CD8-positive, alpha-beta T cell (primary cell): ENCODE measurements at regions of chr20 and their contacts with region 1.

Region 1: GRCh38 chr20:48828022-48828743 is 384 bp upstream of the PREX1 start:
- DNase-seq: peak; percentile 72 to 94 (median 83)
- ATAC-seq: peak; percentile 69
- H3K4me3 ChIP-seq: peak overlapping the region in 1 of 2 experiments; percentile 49
- H3K4me3 Mint-ChIP-seq: peak overlapping the region; percentile 86
- H3K27ac ChIP-seq: peak overlapping the region; percentile 39 to 47
- H3K27ac Mint-ChIP-seq: peak overlapping the region; percentile 90
- H3K4me1 ChIP-seq: peaks cover 33% of the 10 kb centered on the region
- H3K4me1 Mint-ChIP-seq: peaks cover 35% of the 10 kb centered on the region
- H3K27me3 ChIP-seq: no peaks in the 10 kb centered on the region
- H3K27me3 Mint-ChIP-seq: no peaks in the 10 kb centered on the region
- CTCF ChIP-seq: no peak

Region 2: DNA sequence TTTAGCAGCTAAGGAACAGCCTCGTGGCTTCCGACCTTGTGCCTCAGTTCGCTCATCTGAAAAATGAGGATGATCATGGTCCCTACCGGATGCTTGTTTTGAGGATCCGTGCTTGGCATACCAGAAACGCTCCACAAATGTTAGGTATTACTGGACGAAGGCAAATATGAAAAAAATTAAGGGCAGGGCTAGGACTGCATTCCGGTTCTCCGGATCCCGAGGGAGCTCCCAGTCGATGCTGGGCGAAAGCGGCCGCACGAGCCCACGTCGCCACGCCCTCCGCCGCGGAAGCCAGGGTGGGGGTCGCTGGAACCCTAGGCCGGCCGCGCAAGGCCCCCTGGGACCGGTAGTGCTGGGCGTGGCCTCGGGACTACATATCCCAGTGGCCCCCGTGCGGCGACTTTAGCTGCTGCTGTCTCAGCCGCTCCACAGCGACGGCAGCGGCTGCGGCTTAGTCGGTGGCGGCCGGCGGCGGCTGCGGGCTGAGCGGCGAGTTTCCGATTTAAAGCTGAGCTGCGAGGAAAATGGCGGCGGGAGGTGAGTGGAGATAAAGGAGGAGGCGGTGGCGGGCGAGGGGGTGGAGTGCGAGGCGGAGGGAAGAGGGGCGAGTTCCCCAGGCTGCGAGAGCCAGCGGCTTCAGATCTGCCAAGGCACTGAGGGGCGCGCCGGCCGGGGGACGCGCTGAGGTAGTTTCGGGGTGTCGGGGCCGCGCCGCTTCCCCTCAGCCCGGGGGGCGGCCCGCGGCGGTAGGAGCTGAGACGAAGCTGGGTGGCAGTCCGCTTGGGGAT is 1326.5 kb before region 1 on chr20 and contains the start of gene NCOA3:
- CTCF ChIA-PET with region 1: no interaction called
- POLR2A ChIA-PET with region 1: no interaction called
- intact Hi-C with region 1: loop called in 1 of 2 experiments (anchors 10 kb)
- DNase-seq: peak; percentile 73 to 92 (median 90)
- ATAC-seq: peak; percentile 80
- H3K4me3 ChIP-seq: peak within 1 kb of the TSS; percentile 60 to 91
- H3K4me3 Mint-ChIP-seq: peak within 1 kb of the TSS; percentile 97
- H3K27ac ChIP-seq: peak within 1 kb of the TSS; percentile 49 to 71
- H3K27ac Mint-ChIP-seq: peak within 1 kb of the TSS; percentile 98
- H3K4me1 ChIP-seq: peaks cover 24% of the 10 kb centered on the region
- H3K4me1 Mint-ChIP-seq: peaks cover 37% of the 10 kb centered on the region
- H3K27me3 ChIP-seq: no peaks in the 10 kb centered on the region
- H3K27me3 Mint-ChIP-seq: no peaks in the 10 kb centered on the region
- CTCF ChIP-seq: peak; percentile 34
- total RNA-seq, gene NCOA3: 45.1 to 47.1 TPM

Region 3: DNA sequence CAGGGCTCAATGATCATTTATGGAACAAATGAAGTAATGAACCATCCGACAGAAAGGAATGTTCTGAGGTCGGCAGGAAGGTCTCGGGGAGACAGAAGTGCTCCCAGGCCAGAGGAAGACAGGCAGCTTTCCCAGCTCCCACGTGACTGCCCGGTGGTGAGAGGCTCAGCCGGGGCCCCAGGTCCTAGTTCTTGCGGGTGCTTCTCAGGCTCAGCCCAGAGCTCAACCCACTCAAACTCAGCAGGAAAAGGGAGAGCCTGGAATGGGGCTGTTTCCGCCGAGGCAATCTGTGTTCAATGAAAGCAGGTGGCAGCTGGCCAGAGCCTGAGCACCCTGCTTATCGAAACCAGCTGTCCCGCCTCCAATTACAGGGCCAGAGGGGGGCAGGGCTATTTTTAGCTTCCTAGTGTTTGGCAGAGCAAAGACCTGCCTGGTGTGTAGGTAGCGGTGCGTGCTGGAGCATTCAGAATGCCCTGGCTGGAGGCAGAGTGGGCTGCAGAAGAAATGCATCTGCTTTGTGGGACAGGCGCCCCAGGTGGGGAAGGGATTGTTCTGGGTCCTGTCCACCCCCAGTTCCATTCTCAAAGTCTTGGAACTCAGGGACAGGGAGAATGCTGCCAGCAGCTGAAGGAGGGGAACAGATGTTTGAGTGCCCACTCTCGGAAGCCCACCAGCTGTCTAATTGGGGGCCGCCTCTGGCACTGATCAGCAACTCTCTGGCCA is 145.5 kb before region 1 on chr20:
- CTCF ChIA-PET with region 1: no interaction called
- POLR2A ChIA-PET with region 1: no interaction called
- intact Hi-C with region 1: no loop called
- DNase-seq: no peak
- ATAC-seq: no peak
- H3K4me3 ChIP-seq: no peak overlapping the region
- H3K4me3 Mint-ChIP-seq: no peak overlapping the region
- H3K27ac ChIP-seq: no peak overlapping the region
- H3K27ac Mint-ChIP-seq: peak overlapping the region; percentile 13
- H3K4me1 ChIP-seq: no peaks in the 10 kb centered on the region
- H3K4me1 Mint-ChIP-seq: peaks cover 1% of the 10 kb centered on the region
- H3K27me3 ChIP-seq: no peaks in the 10 kb centered on the region
- H3K27me3 Mint-ChIP-seq: no peaks in the 10 kb centered on the region
- CTCF ChIP-seq: no peak

Region 4: GRCh38 chr20:48718857-48719578 is 109.2 kb before region 1 on chr20:
- CTCF ChIA-PET with region 1: interaction called, 4 read pairs
- POLR2A ChIA-PET with region 1: interaction called, 8 read pairs
- intact Hi-C with region 1: loop called (anchors 5 kb)
- DNase-seq: peak in 8 of 9 experiments; percentile 31 to 77 (median 60)
- ATAC-seq: peak; percentile 46
- H3K4me3 ChIP-seq: no peak overlapping the region
- H3K4me3 Mint-ChIP-seq: peak overlapping the region; percentile 66
- H3K27ac ChIP-seq: peak overlapping the region in 1 of 2 experiments; percentile 60
- H3K27ac Mint-ChIP-seq: peak overlapping the region; percentile 92
- H3K4me1 ChIP-seq: peaks cover 98% of the 10 kb centered on the region
- H3K4me1 Mint-ChIP-seq: peaks cover 95% of the 10 kb centered on the region
- H3K27me3 ChIP-seq: no peaks in the 10 kb centered on the region
- H3K27me3 Mint-ChIP-seq: no peaks in the 10 kb centered on the region
- CTCF ChIP-seq: no peak

Region 5: GRCh38 chr20:48750947-48751635 is 77.1 kb before region 1 on chr20:
- CTCF ChIA-PET with region 1: interaction called, 3 read pairs
- POLR2A ChIA-PET with region 1: interaction called, 15 read pairs
- intact Hi-C with region 1: no loop called
- DNase-seq: peak; percentile 16 to 81 (median 58)
- ATAC-seq: peak; percentile 78
- H3K4me3 ChIP-seq: peak overlapping the region; percentile 27 to 32
- H3K4me3 Mint-ChIP-seq: peak overlapping the region; percentile 56
- H3K27ac ChIP-seq: peak overlapping the region; percentile 12 to 68
- H3K27ac Mint-ChIP-seq: peak overlapping the region; percentile 88
- H3K4me1 ChIP-seq: peaks cover 67% of the 10 kb centered on the region
- H3K4me1 Mint-ChIP-seq: peaks cover 77% of the 10 kb centered on the region
- H3K27me3 ChIP-seq: no peaks in the 10 kb centered on the region
- H3K27me3 Mint-ChIP-seq: no peaks in the 10 kb centered on the region
- CTCF ChIP-seq: no peak

Region 6: DNA sequence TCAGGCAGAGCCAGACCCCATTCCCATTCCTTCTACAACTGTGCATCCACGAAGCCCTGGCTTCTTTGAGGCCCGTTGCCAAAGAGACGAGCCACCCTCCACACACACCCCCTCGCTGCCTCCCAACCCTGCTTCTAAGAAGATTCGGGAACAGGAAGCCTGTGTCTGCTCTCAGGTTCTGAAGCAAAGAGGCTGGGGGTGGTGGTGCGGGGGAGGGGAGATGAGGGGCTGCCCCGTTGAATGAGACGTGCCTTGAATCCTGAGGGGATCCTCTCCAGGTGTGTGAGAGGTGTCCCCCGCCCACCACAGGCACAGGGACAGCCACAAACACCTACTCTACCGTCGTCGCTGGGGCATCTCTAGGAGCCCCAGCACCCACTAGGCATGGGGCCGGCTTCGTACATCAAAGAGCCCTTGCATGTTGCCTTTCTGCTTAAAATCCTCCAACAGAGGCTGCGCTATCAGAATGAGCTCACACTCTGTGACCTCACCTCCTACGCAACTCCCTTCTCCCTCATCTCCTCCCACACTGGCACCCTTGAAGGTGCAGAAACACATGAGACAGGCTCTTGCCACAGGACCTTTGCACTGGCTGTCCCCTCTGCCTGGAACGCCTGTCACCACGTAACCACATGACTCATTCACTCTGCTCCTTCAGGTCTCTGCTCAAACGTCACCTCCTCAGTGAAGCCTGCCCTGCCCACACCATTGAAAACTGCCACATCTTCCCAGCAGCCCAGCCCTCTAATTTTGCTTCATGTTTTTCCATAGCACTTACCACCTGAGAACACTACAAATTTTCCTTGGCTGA is 58.9 kb before region 1 on chr20:
- CTCF ChIA-PET with region 1: interaction called, 4 read pairs
- POLR2A ChIA-PET with region 1: interaction called, 3 read pairs
- intact Hi-C with region 1: loop called in 1 of 2 experiments (anchors 1 kb)
- DNase-seq: peak; percentile 55 to 98 (median 85)
- ATAC-seq: peak; percentile 85
- H3K4me3 ChIP-seq: no peak overlapping the region
- H3K4me3 Mint-ChIP-seq: peak overlapping the region; percentile 71
- H3K27ac ChIP-seq: peak overlapping the region; percentile 62 to 89
- H3K27ac Mint-ChIP-seq: peak overlapping the region; percentile 92
- H3K4me1 ChIP-seq: peaks cover 80% of the 10 kb centered on the region
- H3K4me1 Mint-ChIP-seq: peaks cover 91% of the 10 kb centered on the region
- H3K27me3 ChIP-seq: no peaks in the 10 kb centered on the region
- H3K27me3 Mint-ChIP-seq: no peaks in the 10 kb centered on the region
- CTCF ChIP-seq: no peak

Region 7: GRCh38 chr20:48850257-48850975 is 22.2 kb after region 1 on chr20:
- CTCF ChIA-PET with region 1: interaction called, 3 read pairs
- POLR2A ChIA-PET with region 1: no interaction called
- intact Hi-C with region 1: loop called in 1 of 2 experiments (anchors 2 kb)
- DNase-seq: no peak
- ATAC-seq: no peak
- H3K4me3 ChIP-seq: no peak overlapping the region
- H3K4me3 Mint-ChIP-seq: no peak overlapping the region
- H3K27ac ChIP-seq: no peak overlapping the region
- H3K27ac Mint-ChIP-seq: no peak overlapping the region
- H3K4me1 ChIP-seq: no peaks in the 10 kb centered on the region
- H3K4me1 Mint-ChIP-seq: peaks cover 4% of the 10 kb centered on the region
- H3K27me3 ChIP-seq: peaks cover 0 to 3% of the 10 kb centered on the region in 2 experiments
- H3K27me3 Mint-ChIP-seq: no peaks in the 10 kb centered on the region
- CTCF ChIP-seq: no peak

Region 8: GRCh38 chr20:49278036-49278817 is 450.0 kb after region 1 on chr20 and contains the start of gene ZNFX1:
- CTCF ChIA-PET with region 1: no interaction called
- POLR2A ChIA-PET with region 1: no interaction called
- intact Hi-C with region 1: loop called in 1 of 2 experiments (anchors 10 kb)
- DNase-seq: peak; percentile 96 to 99 (median 99)
- ATAC-seq: peak; percentile 83
- H3K4me3 ChIP-seq: peak within 1 kb of the TSS; percentile 71 to 84
- H3K4me3 Mint-ChIP-seq: peak within 1 kb of the TSS; percentile 96
- H3K27ac ChIP-seq: peak within 1 kb of the TSS; percentile 84 to 89
- H3K27ac Mint-ChIP-seq: peak within 1 kb of the TSS; percentile 99
- H3K4me1 ChIP-seq: peaks cover 66% of the 10 kb centered on the region
- H3K4me1 Mint-ChIP-seq: peaks cover 67% of the 10 kb centered on the region
- H3K27me3 ChIP-seq: no peaks in the 10 kb centered on the region
- H3K27me3 Mint-ChIP-seq: no peaks in the 10 kb centered on the region
- CTCF ChIP-seq: no peak
- total RNA-seq, gene ZNFX1: 53.8 to 55.0 TPM